ENCODE measurements at regions of chr15 and their contacts with region 1.

Region 1: GRCh38 chr15:64010719-64011118 is 35.6 kb downstream of the DAPK2 start:
- DNase-seq: peak; percentile 93
- ATAC-seq: peak; percentile 97
- H3K4me3 ChIP-seq: peak overlapping the region in 2 of 5 experiments; percentile 8 to 47
- H3K4me3 Mint-ChIP-seq: peak overlapping the region; percentile 87
- H3K27ac ChIP-seq: peak overlapping the region; percentile 63 to 77
- H3K27ac Mint-ChIP-seq: peak overlapping the region; percentile 97
- H3K4me1 ChIP-seq: peaks cover 27 to 36% of the 10 kb centered on the region in 2 donors
- H3K4me1 Mint-ChIP-seq: peaks cover 43% of the 10 kb centered on the region
- H3K27me3 ChIP-seq: no peaks in the 10 kb centered on the region
- H3K27me3 Mint-ChIP-seq: no peaks in the 10 kb centered on the region
- CTCF ChIP-seq: peak; percentile 51

Region 2: DNA sequence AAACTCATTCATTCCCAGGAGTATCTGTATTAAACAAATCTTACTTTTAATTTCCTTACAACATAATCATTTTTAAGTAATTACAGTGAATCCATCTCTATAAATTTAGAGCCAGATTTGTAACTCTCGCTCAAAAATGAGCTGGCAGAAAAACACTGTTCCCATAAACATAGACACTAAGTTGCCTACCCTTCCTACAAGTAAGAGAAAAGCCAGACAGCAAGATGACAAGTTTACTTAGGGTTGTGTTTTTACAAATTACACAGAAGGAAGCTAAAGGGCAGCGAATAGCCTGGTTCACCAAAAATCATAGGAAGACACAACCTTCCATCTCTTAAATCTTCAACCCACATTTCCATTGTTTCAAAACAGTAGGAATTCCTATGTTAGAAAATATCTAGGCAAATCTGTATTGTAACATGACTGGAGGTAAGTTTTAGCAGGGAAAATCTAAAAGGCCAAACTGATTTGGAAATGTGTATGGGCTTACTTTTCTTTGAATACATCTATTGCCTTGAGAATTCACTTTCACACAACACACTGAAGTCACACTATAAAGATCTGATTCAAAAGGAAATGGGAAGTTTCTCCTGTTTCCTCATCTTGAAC is 198.7 kb before region 1 on chr15:
- CTCF ChIA-PET with region 1: interaction called, 15 read pairs
- POLR2A ChIA-PET with region 1: no interaction called
- intact Hi-C with region 1: no loop called
- DNase-seq: no peak
- ATAC-seq: no peak
- H3K4me3 ChIP-seq: no peak overlapping the region
- H3K4me3 Mint-ChIP-seq: no peak overlapping the region
- H3K27ac ChIP-seq: no peak overlapping the region
- H3K27ac Mint-ChIP-seq: no peak overlapping the region
- H3K4me1 ChIP-seq: peaks cover 38 to 60% of the 10 kb centered on the region in 2 donors
- H3K4me1 Mint-ChIP-seq: peaks cover 79% of the 10 kb centered on the region
- H3K27me3 ChIP-seq: no peaks in the 10 kb centered on the region
- H3K27me3 Mint-ChIP-seq: no peaks in the 10 kb centered on the region
- CTCF ChIP-seq: no peak

Region 3: DNA sequence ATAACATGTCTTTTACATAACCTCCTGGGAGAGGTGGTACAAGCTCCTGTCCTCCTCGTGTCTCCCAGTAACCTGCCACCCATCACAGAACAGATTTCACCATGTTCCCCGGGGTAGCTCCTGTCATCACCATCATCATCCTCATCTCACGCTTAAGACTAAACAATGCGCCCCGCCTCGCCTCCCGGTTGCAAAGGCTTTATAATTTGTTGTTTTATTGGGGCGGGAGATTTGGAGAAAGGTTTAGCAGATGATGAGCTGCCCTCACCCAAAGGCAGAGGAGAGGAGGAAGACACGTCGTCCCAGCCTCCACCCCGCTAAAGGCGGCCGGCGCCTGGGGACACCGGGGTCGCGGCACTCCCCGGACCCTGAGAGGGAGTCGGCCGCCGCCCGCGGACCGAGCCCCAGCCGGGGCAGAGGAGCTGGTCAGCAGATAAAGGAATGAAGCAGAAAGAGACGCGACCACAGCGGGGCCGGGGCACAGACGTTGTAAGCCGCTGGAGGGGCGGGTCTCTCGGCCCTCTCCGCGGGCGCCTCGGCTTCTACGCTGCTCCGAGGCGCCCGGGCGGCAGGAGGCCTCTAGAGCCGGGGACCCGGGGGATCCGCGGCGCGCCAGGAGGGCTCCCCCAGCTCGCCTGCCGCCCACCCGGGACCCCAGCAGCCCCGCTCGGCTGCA is 177.6 kb before region 1 on chr15:
- CTCF ChIA-PET with region 1: interaction called, 24 read pairs
- POLR2A ChIA-PET with region 1: interaction called, 3 read pairs
- intact Hi-C with region 1: loop called (anchors 1 kb)
- DNase-seq: no peak
- ATAC-seq: peak; percentile 39
- H3K4me3 ChIP-seq: peak overlapping the region; percentile 83 to 95 (median 93)
- H3K4me3 Mint-ChIP-seq: peak overlapping the region; percentile 91
- H3K27ac ChIP-seq: peak overlapping the region; percentile 90
- H3K27ac Mint-ChIP-seq: peak overlapping the region; percentile 87
- H3K4me1 ChIP-seq: peaks cover 22 to 27% of the 10 kb centered on the region in 2 donors
- H3K4me1 Mint-ChIP-seq: peaks cover 39% of the 10 kb centered on the region
- H3K27me3 ChIP-seq: no peaks in the 10 kb centered on the region
- H3K27me3 Mint-ChIP-seq: no peaks in the 10 kb centered on the region
- CTCF ChIP-seq: no peak

Region 4: GRCh38 chr15:63945007-63945788 is 65.5 kb before region 1 on chr15:
- CTCF ChIA-PET with region 1: interaction called, 53 read pairs
- POLR2A ChIA-PET with region 1: interaction called, 4 read pairs
- intact Hi-C with region 1: loop called (anchors 2 kb)
- DNase-seq: peak; percentile 69
- ATAC-seq: peak; percentile 78
- H3K4me3 ChIP-seq: no peak overlapping the region
- H3K4me3 Mint-ChIP-seq: no peak overlapping the region
- H3K27ac ChIP-seq: no peak overlapping the region
- H3K27ac Mint-ChIP-seq: peak overlapping the region; percentile 23
- H3K4me1 ChIP-seq: peaks cover 13 to 26% of the 10 kb centered on the region in 2 donors
- H3K4me1 Mint-ChIP-seq: peaks cover 25% of the 10 kb centered on the region
- H3K27me3 ChIP-seq: peaks cover 0 to 2% (median 0%) of the 10 kb centered on the region in 4 experiments
- H3K27me3 Mint-ChIP-seq: no peaks in the 10 kb centered on the region
- CTCF ChIP-seq: peak; percentile 98

Region 5: GRCh38 chr15:63986751-63987341 is 23.9 kb before region 1 on chr15:
- CTCF ChIA-PET with region 1: interaction called, 40 read pairs
- POLR2A ChIA-PET with region 1: interaction called, 17 read pairs
- intact Hi-C with region 1: loop called (anchors 1 kb)
- DNase-seq: peak; percentile 79
- ATAC-seq: peak; percentile 90
- H3K4me3 ChIP-seq: no peak overlapping the region
- H3K4me3 Mint-ChIP-seq: peak overlapping the region; percentile 70
- H3K27ac ChIP-seq: peak overlapping the region; percentile 57 to 63
- H3K27ac Mint-ChIP-seq: peak overlapping the region; percentile 96
- H3K4me1 ChIP-seq: peaks cover 46 to 56% of the 10 kb centered on the region in 2 donors
- H3K4me1 Mint-ChIP-seq: peaks cover 62% of the 10 kb centered on the region
- H3K27me3 ChIP-seq: no peaks in the 10 kb centered on the region
- H3K27me3 Mint-ChIP-seq: no peaks in the 10 kb centered on the region
- CTCF ChIP-seq: no peak

Region 6: GRCh38 chr15:64046347-64047153 is 35.8 kb after region 1 on chr15 and contains the start of gene DAPK2:
- CTCF ChIA-PET with region 1: interaction called, 79 read pairs
- POLR2A ChIA-PET with region 1: interaction called, 19 read pairs
- intact Hi-C with region 1: loop called (anchors 2 kb)
- DNase-seq: peak; percentile 70
- ATAC-seq: peak; percentile 61
- H3K4me3 ChIP-seq: peak within 1 kb of the TSS; percentile 34 to 54 (median 43)
- H3K4me3 Mint-ChIP-seq: peak within 1 kb of the TSS; percentile 86
- H3K27ac ChIP-seq: no peak within 1 kb of the TSS
- H3K27ac Mint-ChIP-seq: peak within 1 kb of the TSS; percentile 91
- H3K4me1 ChIP-seq: peaks cover 61 to 71% of the 10 kb centered on the region in 2 donors
- H3K4me1 Mint-ChIP-seq: peaks cover 59% of the 10 kb centered on the region
- H3K27me3 ChIP-seq: no peaks in the 10 kb centered on the region
- H3K27me3 Mint-ChIP-seq: no peaks in the 10 kb centered on the region
- CTCF ChIP-seq: peak; percentile 67
- total RNA-seq, gene DAPK2: 31.0 and 31.9 TPM in 2 replicates

Region 7: GRCh38 chr15:64166104-64166890 is 155.6 kb after region 1 on chr15:
- CTCF ChIA-PET with region 1: no interaction called
- POLR2A ChIA-PET with region 1: no interaction called
- intact Hi-C with region 1: no loop called
- DNase-seq: no peak
- ATAC-seq: no peak
- H3K4me3 ChIP-seq: no peak overlapping the region
- H3K4me3 Mint-ChIP-seq: no peak overlapping the region
- H3K27ac ChIP-seq: no peak overlapping the region
- H3K27ac Mint-ChIP-seq: peak overlapping the region; percentile 57
- H3K4me1 ChIP-seq: peaks cover 25 to 29% of the 10 kb centered on the region in 2 donors
- H3K4me1 Mint-ChIP-seq: peaks cover 33% of the 10 kb centered on the region
- H3K27me3 ChIP-seq: no peaks in the 10 kb centered on the region
- H3K27me3 Mint-ChIP-seq: no peaks in the 10 kb centered on the region
- CTCF ChIP-seq: no peak

Region 8: GRCh38 chr15:64387562-64388168 is 376.9 kb after region 1 on chr15 and contains the start of gene TRIP4:
- CTCF ChIA-PET with region 1: no interaction called
- POLR2A ChIA-PET with region 1: no interaction called
- intact Hi-C with region 1: no loop called
- DNase-seq: peak; percentile 96
- ATAC-seq: peak; percentile 100
- H3K4me3 ChIP-seq: peak within 1 kb of the TSS; percentile 63 to 97 (median 82)
- H3K4me3 Mint-ChIP-seq: peak within 1 kb of the TSS; percentile 97
- H3K27ac ChIP-seq: peak within 1 kb of the TSS; percentile 58 to 70
- H3K27ac Mint-ChIP-seq: peak within 1 kb of the TSS; percentile 95
- H3K4me1 ChIP-seq: peaks cover 10 to 18% of the 10 kb centered on the region in 2 donors
- H3K4me1 Mint-ChIP-seq: peaks cover 15% of the 10 kb centered on the region
- H3K27me3 ChIP-seq: no peaks in the 10 kb centered on the region
- H3K27me3 Mint-ChIP-seq: no peaks in the 10 kb centered on the region
- CTCF ChIP-seq: no peak
- total RNA-seq, gene TRIP4: 35.7 and 38.2 TPM in 2 replicates

Measured in B cell (primary cell).